ENCODE measurements at regions of chr14 and their contacts with region 1.

Region 1: GRCh38 chr14:74478996-74479635 is 14.0 kb downstream of the NPC2 start:
- DNase-seq: no peak
- ATAC-seq: peak; percentile 72
- H3K4me3 ChIP-seq: no peak overlapping the region
- H3K27ac ChIP-seq: no peak overlapping the region
- H3K4me1 ChIP-seq: no peaks in the 10 kb centered on the region
- H3K27me3 ChIP-seq: no peaks in the 10 kb centered on the region
- CTCF ChIP-seq: peak; percentile 83 to 89 (median 85); a peak in 5 of 6 replicates
- POLR2A ChIP-seq: no peak
- RAD21 ChIP-seq: peak; percentile 93

Region 2: DNA sequence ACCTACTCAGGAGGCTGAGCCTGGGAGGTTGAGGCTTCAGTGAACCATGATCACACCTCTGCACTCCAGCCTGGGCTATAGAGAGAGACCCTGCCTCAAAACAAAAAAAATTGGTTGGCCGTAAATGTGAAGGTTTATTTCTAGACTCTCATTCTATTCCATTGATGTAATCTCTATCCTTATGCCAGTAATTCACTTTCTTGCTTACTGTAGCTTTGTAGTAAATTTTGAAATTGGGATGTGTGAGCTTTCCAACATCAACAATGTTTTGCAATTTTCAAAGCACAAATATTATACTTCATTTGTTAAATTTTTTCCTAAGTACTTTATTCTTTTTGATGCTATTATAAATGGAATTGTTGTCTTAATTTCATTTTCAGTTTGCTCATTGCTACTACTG is 369.7 kb before region 1 on chr14:
- CTCF ChIA-PET with region 1: interaction called, 3 read pairs
- POLR2A ChIA-PET with region 1: no interaction called
- RAD21 ChIA-PET with region 1: no interaction called
- intact Hi-C with region 1: loop called (anchors 1 kb)
- DNase-seq: no peak
- ATAC-seq: no peak
- H3K4me3 ChIP-seq: no peak overlapping the region
- H3K27ac ChIP-seq: no peak overlapping the region
- H3K4me1 ChIP-seq: no peaks in the 10 kb centered on the region
- H3K27me3 ChIP-seq: no peaks in the 10 kb centered on the region
- CTCF ChIP-seq: no peak
- POLR2A ChIP-seq: no peak
- RAD21 ChIP-seq: no peak

Region 3: DNA sequence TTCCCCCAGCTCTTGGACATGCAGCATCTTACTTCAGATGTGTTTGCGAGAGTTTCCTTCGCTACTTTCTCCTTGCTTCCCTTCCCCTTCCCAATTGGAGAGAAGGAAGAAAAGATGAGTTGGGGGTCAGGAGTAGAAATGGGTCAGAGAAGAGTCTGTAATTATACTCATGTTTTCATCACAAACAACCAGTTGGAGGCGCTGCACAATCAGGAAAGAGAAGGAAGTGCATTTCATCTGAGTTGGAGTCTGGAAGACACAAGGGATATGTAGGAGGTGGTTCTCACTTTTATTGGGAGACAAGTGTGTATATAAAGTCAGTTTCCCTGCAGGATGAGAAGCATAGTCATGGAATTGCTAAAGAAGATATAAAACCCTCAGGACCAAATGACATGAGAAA is 271.2 kb before region 1 on chr14:
- CTCF ChIA-PET with region 1: no interaction called
- POLR2A ChIA-PET with region 1: no interaction called
- RAD21 ChIA-PET with region 1: no interaction called
- intact Hi-C with region 1: loop called (anchors 10 kb)
- DNase-seq: peak; percentile 16
- ATAC-seq: peak; percentile 58; the same call in 1 of the 2 replicates
- H3K4me3 ChIP-seq: no peak overlapping the region
- H3K27ac ChIP-seq: no peak overlapping the region
- H3K4me1 ChIP-seq: no peaks in the 10 kb centered on the region
- H3K27me3 ChIP-seq: no peaks in the 10 kb centered on the region
- CTCF ChIP-seq: peak; percentile 43 to 65 (median 53); a peak in 5 of 6 replicates
- POLR2A ChIP-seq: no peak
- RAD21 ChIP-seq: peak; percentile 62

Region 4: DNA sequence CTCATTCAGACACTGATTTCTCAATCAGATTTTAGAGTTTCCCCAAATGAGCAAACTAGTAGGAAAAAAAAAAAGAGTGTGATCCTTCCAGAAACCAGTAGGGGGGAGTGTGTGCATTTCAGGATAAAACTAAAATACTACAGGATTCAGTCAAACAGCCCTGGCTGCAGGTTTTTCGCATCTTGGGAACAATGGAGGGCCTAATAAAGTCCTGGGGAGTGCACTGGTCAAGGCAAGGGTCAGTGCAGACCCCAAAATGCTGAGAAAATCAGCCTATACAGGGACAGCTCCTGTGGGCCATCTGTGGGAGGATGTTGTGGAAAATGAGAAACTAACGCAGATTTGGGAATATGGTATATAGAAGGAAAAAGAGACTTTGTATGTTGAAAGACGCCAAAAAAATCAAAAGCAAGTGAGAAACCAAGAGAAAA is 154.2 kb before region 1 on chr14:
- CTCF ChIA-PET with region 1: interaction called, 4 read pairs
- POLR2A ChIA-PET with region 1: no interaction called
- RAD21 ChIA-PET with region 1: no interaction called
- intact Hi-C with region 1: loop called (anchors 10 kb)
- DNase-seq: no peak
- ATAC-seq: peak; percentile 76
- H3K4me3 ChIP-seq: no peak overlapping the region
- H3K27ac ChIP-seq: no peak overlapping the region
- H3K4me1 ChIP-seq: no peaks in the 10 kb centered on the region
- H3K27me3 ChIP-seq: no peaks in the 10 kb centered on the region
- CTCF ChIP-seq: peak; percentile 65; a peak in 5 of 6 replicates
- POLR2A ChIP-seq: no peak
- RAD21 ChIP-seq: peak; percentile 69

Region 5: GRCh38 chr14:74362361-74362915 is 116.7 kb before region 1 on chr14:
- CTCF ChIA-PET with region 1: interaction called, 6 read pairs
- POLR2A ChIA-PET with region 1: no interaction called
- RAD21 ChIA-PET with region 1: no interaction called
- intact Hi-C with region 1: loop called (anchors 1 kb)
- DNase-seq: peak; percentile 41
- ATAC-seq: peak; percentile 93
- H3K4me3 ChIP-seq: no peak overlapping the region
- H3K27ac ChIP-seq: no peak overlapping the region
- H3K4me1 ChIP-seq: peaks cover 2 to 5% of the 10 kb centered on the region in 2 experiments; a peak in 3 of 4 replicates
- H3K27me3 ChIP-seq: no peaks in the 10 kb centered on the region
- CTCF ChIP-seq: peak; percentile 81 to 96 (median 96)
- POLR2A ChIP-seq: no peak
- RAD21 ChIP-seq: peak; percentile 90

Region 6: GRCh38 chr14:74579447-74580274 is 100.5 kb after region 1 on chr14:
- CTCF ChIA-PET with region 1: no interaction called
- POLR2A ChIA-PET with region 1: no interaction called
- RAD21 ChIA-PET with region 1: no interaction called
- intact Hi-C with region 1: no loop called
- DNase-seq: peak; percentile 62
- ATAC-seq: peak; percentile 69
- H3K4me3 ChIP-seq: peak overlapping the region in 1 of 2 experiments; percentile 22; a peak in 1 of 4 replicates
- H3K27ac ChIP-seq: peak overlapping the region; percentile 68
- H3K4me1 ChIP-seq: peaks cover 42 to 70% of the 10 kb centered on the region in 2 experiments
- H3K27me3 ChIP-seq: no peaks in the 10 kb centered on the region
- CTCF ChIP-seq: no peak
- POLR2A ChIP-seq: no peak
- RAD21 ChIP-seq: no peak

Region 7: DNA sequence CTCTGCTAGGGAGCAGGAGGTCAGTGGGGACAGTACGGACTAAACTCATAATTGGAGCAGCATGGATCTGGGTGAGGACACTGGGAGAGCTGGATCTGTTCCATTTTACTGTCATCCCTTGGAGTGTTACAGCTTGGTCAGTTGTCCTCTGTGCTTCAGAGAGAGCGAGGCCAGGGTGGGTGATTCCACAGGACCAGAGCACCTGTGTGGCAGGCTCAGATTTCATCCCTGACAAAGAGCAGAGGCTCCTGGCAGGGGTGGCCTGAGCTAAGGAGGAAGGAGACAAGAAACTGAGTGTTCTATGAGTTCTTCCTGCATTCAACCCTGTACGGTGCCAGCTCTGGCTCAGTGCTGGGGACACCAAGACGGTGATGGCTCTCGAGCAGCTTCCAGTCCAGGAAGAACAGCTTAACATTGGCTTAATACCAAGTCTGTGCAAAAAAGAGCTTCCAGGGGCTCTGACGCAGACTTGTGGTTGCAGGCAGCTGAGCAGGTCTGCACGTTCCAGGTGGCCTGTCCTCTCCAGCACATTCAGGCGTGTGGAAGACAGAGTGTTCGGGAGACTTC is 484.7 kb after region 1 on chr14:
- CTCF ChIA-PET with region 1: no interaction called
- POLR2A ChIA-PET with region 1: no interaction called
- RAD21 ChIA-PET with region 1: no interaction called
- intact Hi-C with region 1: no loop called
- DNase-seq: no peak
- ATAC-seq: no peak
- H3K4me3 ChIP-seq: no peak overlapping the region
- H3K27ac ChIP-seq: no peak overlapping the region
- H3K4me1 ChIP-seq: no peaks in the 10 kb centered on the region
- H3K27me3 ChIP-seq: no peaks in the 10 kb centered on the region
- CTCF ChIP-seq: no peak
- POLR2A ChIP-seq: no peak
- RAD21 ChIP-seq: no peak

Measured in HCT116 (cell line).